ENCODE measurements at regions of chr1 and their contacts with region 1.

Region 1: DNA sequence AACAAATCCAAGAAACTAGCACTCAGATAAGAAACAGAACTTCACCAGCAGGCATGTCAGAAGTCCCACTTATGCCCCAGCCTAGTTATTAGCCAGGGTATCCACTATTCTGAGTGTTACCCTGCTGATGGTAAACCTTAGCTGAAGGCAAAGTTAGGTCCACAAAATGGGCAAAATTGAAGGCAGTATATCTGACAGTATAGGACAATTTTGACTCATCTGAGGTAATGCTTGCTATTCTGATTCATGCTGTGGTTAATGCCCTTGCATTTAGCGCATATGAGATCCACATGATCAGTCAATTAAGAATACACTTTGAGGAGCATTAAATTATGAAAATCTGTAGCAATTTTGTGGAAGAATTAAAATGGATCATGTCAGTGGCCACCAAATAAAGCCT is 15.1 kb downstream of the IFI44 start:
- DNase-seq: no peak
- H3K4me3 ChIP-seq: no peak overlapping the region
- CTCF ChIP-seq: no peak

Region 2: GRCh38 chr1:78676347-78676982 is 11.7 kb after region 1 on chr1:
- CTCF ChIA-PET with region 1: interaction called, 22 read pairs
- POLR2A ChIA-PET with region 1: no interaction called
- DNase-seq: peak; percentile 12
- H3K4me3 ChIP-seq: no peak overlapping the region
- CTCF ChIP-seq: peak; percentile 37